A549 (cell line): ENCODE measurements at regions of chr15 and their contacts with region 1.

Region 1: GRCh38 chr15:64460206-64460734 is at the start of gene ZNF609:
- DNase-seq: peak; percentile 96 to 99
- ATAC-seq: peak; percentile 83 to 88
- H3K4me3 ChIP-seq: peak within 1 kb of the TSS; percentile 85
- H3K27ac ChIP-seq: peak within 1 kb of the TSS; percentile 98
- H3K4me1 ChIP-seq: peaks cover 42% of the 10 kb centered on the region
- CTCF ChIP-seq: 0 out of 3 replicates have a peak, but pooled peaks have one; percentile 3
- EP300 ChIP-seq: no peak
- POLR2A ChIP-seq: peak; percentile 20; the same call in 1 of the 2 replicates
- RAD21 ChIP-seq: peak; percentile 35 to 47; a peak in 4 of 5 replicates
- polyA plus RNA-seq, gene ZNF609: 39.9 and 54.4 TPM in 2 replicates

Region 2: GRCh38 chr15:64024172-64025050 is 435.9 kb before region 1 on chr15:
- CTCF ChIA-PET with region 1: no interaction called
- POLR2A ChIA-PET with region 1: no interaction called
- DNase-seq: peak in 1 of 2 experiments; percentile 41
- ATAC-seq: peak; percentile 57 to 60
- H3K4me3 ChIP-seq: no peak overlapping the region
- H3K27ac ChIP-seq: peak overlapping the region; percentile 4 to 25; a peak in 3 of 6 replicates
- H3K4me1 ChIP-seq: peaks cover 29% of the 10 kb centered on the region
- CTCF ChIP-seq: no peak
- EP300 ChIP-seq: no peak
- POLR2A ChIP-seq: no peak
- RAD21 ChIP-seq: no peak

Region 3: GRCh38 chr15:64337761-64338160 is 122.5 kb before region 1 on chr15:
- CTCF ChIA-PET with region 1: no interaction called
- POLR2A ChIA-PET with region 1: no interaction called
- DNase-seq: no peak
- ATAC-seq: no peak
- H3K4me3 ChIP-seq: no peak overlapping the region
- H3K27ac ChIP-seq: no peak overlapping the region
- H3K4me1 ChIP-seq: 0 out of 3 replicates have a peak, but pooled peaks cover 5% of the 10 kb centered on the region
- CTCF ChIP-seq: no peak
- EP300 ChIP-seq: no peak
- POLR2A ChIP-seq: no peak
- RAD21 ChIP-seq: no peak

Region 4: DNA sequence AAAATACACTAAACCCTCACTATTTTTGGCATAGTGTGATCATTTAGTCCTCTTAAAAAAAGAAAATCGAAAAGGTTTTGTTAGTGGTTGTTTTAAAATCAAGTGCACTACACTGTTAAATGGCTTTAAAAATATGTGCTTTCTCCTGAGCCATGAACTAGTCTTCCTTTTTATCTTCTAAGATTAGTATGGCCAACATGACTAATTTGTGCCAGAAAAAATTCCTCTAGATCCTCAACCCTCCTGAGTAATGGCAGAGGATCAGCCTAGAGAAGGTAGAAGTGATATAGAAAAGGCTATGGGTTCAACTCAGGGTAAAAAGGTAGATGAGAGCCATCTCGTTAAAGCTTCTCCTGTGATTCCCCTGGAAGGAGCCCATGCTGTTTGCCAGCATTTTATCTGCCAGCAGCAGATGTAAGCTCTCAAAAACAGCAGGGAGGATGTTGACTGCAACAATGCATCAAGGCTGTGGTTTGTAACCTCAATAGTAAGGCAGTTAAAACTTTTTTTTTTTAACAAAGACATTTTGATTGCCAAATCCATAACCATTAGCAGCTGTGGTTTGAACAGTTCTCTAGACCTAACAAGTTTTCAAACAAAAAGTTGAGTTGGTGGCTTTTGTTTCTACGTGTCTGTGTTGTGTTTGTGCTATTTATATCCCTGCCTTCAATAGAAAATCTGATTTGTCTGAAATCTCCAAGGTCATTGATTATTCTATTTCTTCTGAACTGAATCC is 30.1 kb before region 1 on chr15:
- CTCF ChIA-PET with region 1: interaction called, 16 read pairs
- POLR2A ChIA-PET with region 1: no interaction called
- DNase-seq: no peak
- ATAC-seq: no peak
- H3K4me3 ChIP-seq: no peak overlapping the region
- H3K27ac ChIP-seq: no peak overlapping the region
- H3K4me1 ChIP-seq: 0 out of 3 replicates have a peak, but pooled peaks cover 6% of the 10 kb centered on the region
- CTCF ChIP-seq: no peak
- EP300 ChIP-seq: no peak
- POLR2A ChIP-seq: no peak
- RAD21 ChIP-seq: no peak